ENCODE measurements at regions of chr5 and their contacts with region 1.

Region 1: DNA sequence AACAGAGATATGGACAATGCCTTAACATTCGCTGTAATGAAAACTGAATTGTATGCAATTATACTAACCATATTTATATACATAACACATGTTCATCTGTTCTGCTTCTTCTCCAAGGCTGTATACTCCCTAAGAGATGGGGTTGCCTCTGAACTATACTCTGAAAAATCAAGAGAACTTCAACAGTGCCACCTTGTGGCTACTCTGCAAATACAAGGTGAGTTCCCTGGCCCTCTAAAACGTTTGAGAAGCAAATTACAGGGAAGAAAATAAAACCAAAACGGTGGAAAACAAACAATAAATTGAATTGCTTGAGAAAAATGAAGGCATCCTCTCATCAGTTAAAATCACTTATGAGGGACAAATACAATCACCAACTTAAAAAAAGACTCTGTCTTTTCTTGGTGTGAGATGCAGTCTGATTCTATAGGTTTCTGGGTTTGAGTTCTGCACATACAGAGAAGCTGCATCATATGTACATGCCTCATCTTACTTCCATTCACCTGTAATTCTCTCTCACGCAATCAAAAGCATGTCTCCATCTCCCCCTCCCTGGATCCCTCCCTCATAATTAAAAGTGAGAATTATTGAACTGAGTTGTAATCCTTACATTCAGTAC is 98.6 kb downstream of the FBXW11 start:
- DNase-seq: peak; percentile 48 to 73 (median 67)
- ATAC-seq: peak; percentile 96
- H3K4me3 ChIP-seq: no peak overlapping the region
- H3K27ac ChIP-seq: no peak overlapping the region
- H3K4me1 ChIP-seq: no peaks in the 10 kb centered on the region
- H3K27me3 ChIP-seq: no peaks in the 10 kb centered on the region
- CTCF ChIP-seq: peak; percentile 51 to 74 (median 73); a peak in 5 of 6 replicates
- EP300 ChIP-seq: no peak
- POLR2A ChIP-seq: no peak
- RAD21 ChIP-seq: peak; percentile 77 to 78

Region 2: GRCh38 chr5:171484460-171484899 is 423.4 kb before region 1 on chr5:
- CTCF ChIA-PET with region 1: no interaction called
- POLR2A ChIA-PET with region 1: no interaction called
- in situ Hi-C with region 1: no loop called
- intact Hi-C with region 1: loop called (anchors 5 kb)
- DNase-seq: peak; percentile 57 to 88 (median 86)
- ATAC-seq: peak; percentile 85
- H3K4me3 ChIP-seq: no peak overlapping the region
- H3K27ac ChIP-seq: no peak overlapping the region
- H3K4me1 ChIP-seq: peaks cover 0 to 11% of the 10 kb centered on the region in 2 experiments; a peak in 1 of 5 replicates
- H3K27me3 ChIP-seq: peaks cover 5 to 44% of the 10 kb centered on the region in 2 experiments; a peak in 4 of 5 replicates
- CTCF ChIP-seq: peak; percentile 76 to 88 (median 78)
- EP300 ChIP-seq: no peak
- POLR2A ChIP-seq: no peak
- RAD21 ChIP-seq: peak; percentile 49 to 69

Region 3: GRCh38 chr5:172035039-172035438 is 127.2 kb after region 1 on chr5:
- CTCF ChIA-PET with region 1: interaction called, 43 read pairs
- POLR2A ChIA-PET with region 1: interaction called, 3 read pairs
- in situ Hi-C with region 1: no loop called
- intact Hi-C with region 1: loop called (anchors 1 kb)
- DNase-seq: no peak
- ATAC-seq: no peak; the same call in 2 of the 3 replicates
- H3K4me3 ChIP-seq: no peak overlapping the region
- H3K27ac ChIP-seq: no peak overlapping the region
- H3K4me1 ChIP-seq: no peaks in the 10 kb centered on the region
- H3K27me3 ChIP-seq: peaks cover 0 to 4% of the 10 kb centered on the region in 2 experiments; a peak in 2 of 5 replicates
- CTCF ChIP-seq: no peak
- EP300 ChIP-seq: no peak
- POLR2A ChIP-seq: no peak
- RAD21 ChIP-seq: no peak

Region 4: GRCh38 chr5:172059661-172060100 is 151.8 kb after region 1 on chr5:
- CTCF ChIA-PET with region 1: interaction called, 22 read pairs
- POLR2A ChIA-PET with region 1: interaction called, 5 read pairs
- in situ Hi-C with region 1: no loop called
- intact Hi-C with region 1: loop called (anchors 1 kb)
- DNase-seq: peak; percentile 38 to 51 (median 51)
- ATAC-seq: peak; percentile 84
- H3K4me3 ChIP-seq: no peak overlapping the region
- H3K27ac ChIP-seq: no peak overlapping the region
- H3K4me1 ChIP-seq: peaks cover 0 to 7% of the 10 kb centered on the region in 2 experiments; a peak in 3 of 5 replicates
- H3K27me3 ChIP-seq: peaks cover 0 to 7% of the 10 kb centered on the region in 2 experiments; a peak in 1 of 5 replicates
- CTCF ChIP-seq: peak; percentile 70 to 82 (median 78)
- EP300 ChIP-seq: no peak
- POLR2A ChIP-seq: no peak
- RAD21 ChIP-seq: peak; percentile 65 to 82

Region 5: GRCh38 chr5:172188033-172188892 is 280.4 kb after region 1 on chr5 and contains the start of gene STK10:
- CTCF ChIA-PET with region 1: interaction called, 4 read pairs
- POLR2A ChIA-PET with region 1: no interaction called
- in situ Hi-C with region 1: no loop called
- intact Hi-C with region 1: loop called (anchors 1 kb)
- DNase-seq: peak; percentile 85 to 91 (median 88)
- ATAC-seq: peak; percentile 90
- H3K4me3 ChIP-seq: peak within 1 kb of the TSS; percentile 60
- H3K27ac ChIP-seq: no peak within 1 kb of the TSS; the same call in 2 of the 3 replicates
- H3K4me1 ChIP-seq: peaks cover 7 to 19% of the 10 kb centered on the region in 2 experiments; a peak in 3 of 5 replicates
- H3K27me3 ChIP-seq: no peaks in the 10 kb centered on the region
- CTCF ChIP-seq: peak; percentile 91 to 94 (median 94)
- EP300 ChIP-seq: no peak
- POLR2A ChIP-seq: peak; percentile 52
- RAD21 ChIP-seq: peak; percentile 98 to 99
- polyA plus RNA-seq, gene STK10: 0.30 to 0.55 TPM